ENCODE measurements at regions of chr17 and their contacts with region 1.

Region 1: GRCh38 chr17:75667021-75667790 is at the starts of genes RECQL5 and SAP30BP:
- DNase-seq: peak; percentile 99
- H3K4me3 Mint-ChIP-seq: no peak within 1 kb of the TSS
- H3K27ac Mint-ChIP-seq: no peak within 1 kb of the TSS
- H3K4me1 Mint-ChIP-seq: peaks cover 15% of the 10 kb centered on the region
- H3K27me3 Mint-ChIP-seq: no peaks in the 10 kb centered on the region
- CTCF ChIP-seq: no peak
- total RNA-seq, gene RECQL5: 36.3 and 47.9 TPM in 2 replicates
- total RNA-seq, gene SAP30BP: 108 and 123 TPM in 2 replicates

Region 2: DNA sequence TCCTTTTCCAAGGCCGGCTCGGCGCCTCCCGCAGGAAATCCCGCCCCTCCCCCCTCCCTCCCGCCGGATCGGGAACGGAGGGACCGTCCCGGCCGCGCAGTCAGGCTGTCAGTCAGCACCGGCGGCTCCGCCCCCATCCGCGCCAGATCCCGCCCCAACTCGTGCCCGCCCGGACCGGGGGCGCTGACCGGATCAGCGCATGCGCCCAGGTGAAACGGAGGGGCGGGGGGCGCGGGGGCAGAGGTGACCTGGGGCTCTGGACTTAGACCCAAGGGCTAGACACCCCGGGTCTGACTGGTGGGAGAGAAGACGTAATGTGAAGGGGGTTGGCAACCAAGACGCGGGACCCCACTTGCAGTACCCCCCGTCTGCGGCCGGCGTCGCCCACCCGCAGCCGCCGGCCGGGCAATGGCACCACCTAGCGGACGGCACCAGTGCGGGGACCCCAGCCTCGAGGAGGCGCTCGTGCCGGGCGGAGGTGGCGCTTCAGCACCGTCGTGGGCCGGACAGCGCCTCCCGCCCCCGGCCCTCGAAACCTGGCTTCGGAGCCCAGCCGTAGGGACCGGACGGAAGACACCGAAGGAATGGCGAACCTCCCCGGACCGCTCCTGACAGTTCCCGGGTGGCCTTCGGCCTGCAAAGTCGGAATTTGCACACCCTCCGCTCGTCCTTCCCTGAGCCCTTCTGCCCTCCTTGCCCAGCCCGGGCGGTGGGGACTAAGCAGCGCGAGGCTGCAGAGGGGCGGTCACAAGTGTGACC is 151.5 kb before region 1 on chr17 and contains the start of gene CASKIN2:
- CTCF ChIA-PET with region 1: no interaction called
- POLR2A ChIA-PET with region 1: interaction called, 11 read pairs
- intact Hi-C with region 1: no loop called
- DNase-seq: peak; percentile 91
- H3K4me3 Mint-ChIP-seq: peak within 1 kb of the TSS; percentile 81
- H3K27ac Mint-ChIP-seq: no peak within 1 kb of the TSS
- H3K4me1 Mint-ChIP-seq: peaks cover 11% of the 10 kb centered on the region
- H3K27me3 Mint-ChIP-seq: no peaks in the 10 kb centered on the region
- CTCF ChIP-seq: peak; percentile 96
- total RNA-seq, gene CASKIN2: 19.2 and 19.8 TPM in 2 replicates

Region 3: DNA sequence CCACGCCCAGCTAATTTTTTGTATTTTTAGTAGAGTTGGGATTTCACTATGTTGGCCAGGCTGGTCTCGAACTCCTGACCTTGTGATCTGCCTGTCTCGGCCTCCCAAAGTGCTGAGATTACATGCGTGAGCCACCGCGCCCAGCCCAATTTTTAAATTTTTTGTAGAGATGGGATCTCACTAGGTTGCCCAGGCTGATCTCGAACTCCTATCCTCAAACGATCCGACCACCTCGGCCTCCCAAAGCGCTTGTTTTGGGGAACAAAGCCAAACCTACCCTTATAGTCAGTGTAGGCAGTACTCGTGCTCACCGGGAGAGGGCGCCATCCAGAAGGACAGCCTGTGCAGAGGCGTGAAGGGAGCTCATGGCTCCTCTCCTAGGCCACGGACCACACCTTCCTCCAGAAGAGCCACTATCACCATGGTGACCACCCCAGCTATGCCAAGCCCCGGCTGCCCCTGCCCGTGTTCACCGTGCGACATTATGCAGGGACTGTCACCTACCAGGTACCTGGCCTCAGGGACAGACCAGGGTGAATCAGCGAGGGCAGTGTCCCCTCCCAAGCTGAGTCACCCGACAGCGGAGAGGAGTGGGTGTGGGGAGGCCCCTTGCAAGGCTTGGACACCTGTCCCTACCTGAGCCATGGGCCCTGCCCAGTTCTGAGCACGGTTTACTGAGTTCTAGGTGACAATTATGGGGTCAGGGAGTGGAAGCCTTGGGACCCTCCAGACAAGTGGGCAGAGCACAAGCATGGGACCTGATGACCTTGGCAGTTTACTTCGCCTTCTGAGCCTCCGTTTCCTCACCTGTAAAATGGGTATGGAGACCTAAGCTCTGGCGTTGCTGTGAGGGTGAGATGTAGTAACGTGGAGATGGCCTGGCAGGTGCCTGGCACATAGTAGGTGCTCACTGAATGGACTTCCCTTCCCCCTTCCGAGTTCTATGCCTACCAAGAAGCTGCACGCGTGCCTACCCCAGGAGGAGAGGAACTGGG is 65.9 kb before region 1 on chr17:
- CTCF ChIA-PET with region 1: no interaction called
- POLR2A ChIA-PET with region 1: no interaction called
- intact Hi-C with region 1: no loop called
- DNase-seq: peak; percentile 70
- H3K4me3 Mint-ChIP-seq: no peak overlapping the region
- H3K27ac Mint-ChIP-seq: no peak overlapping the region
- H3K4me1 Mint-ChIP-seq: peaks cover 18% of the 10 kb centered on the region
- H3K27me3 Mint-ChIP-seq: no peaks in the 10 kb centered on the region
- CTCF ChIP-seq: peak; percentile 79

Region 4: GRCh38 chr17:75652915-75653549 is 14.2 kb before region 1 on chr17:
- CTCF ChIA-PET with region 1: interaction called, 3 read pairs
- POLR2A ChIA-PET with region 1: interaction called, 25 read pairs
- intact Hi-C with region 1: no loop called
- DNase-seq: peak; percentile 38
- H3K4me3 Mint-ChIP-seq: no peak overlapping the region
- H3K27ac Mint-ChIP-seq: no peak overlapping the region
- H3K4me1 Mint-ChIP-seq: no peaks in the 10 kb centered on the region
- H3K27me3 Mint-ChIP-seq: no peaks in the 10 kb centered on the region
- CTCF ChIP-seq: peak; percentile 54

Region 5: GRCh38 chr17:75688209-75688825 is 21.1 kb after region 1 on chr17:
- CTCF ChIA-PET with region 1: interaction called, 5 read pairs
- POLR2A ChIA-PET with region 1: interaction called, 17 read pairs
- intact Hi-C with region 1: no loop called
- DNase-seq: peak; percentile 81
- H3K4me3 Mint-ChIP-seq: peak overlapping the region; percentile 0
- H3K27ac Mint-ChIP-seq: peak overlapping the region; percentile 90
- H3K4me1 Mint-ChIP-seq: peaks cover 75% of the 10 kb centered on the region
- H3K27me3 Mint-ChIP-seq: no peaks in the 10 kb centered on the region
- CTCF ChIP-seq: no peak

Region 6: DNA sequence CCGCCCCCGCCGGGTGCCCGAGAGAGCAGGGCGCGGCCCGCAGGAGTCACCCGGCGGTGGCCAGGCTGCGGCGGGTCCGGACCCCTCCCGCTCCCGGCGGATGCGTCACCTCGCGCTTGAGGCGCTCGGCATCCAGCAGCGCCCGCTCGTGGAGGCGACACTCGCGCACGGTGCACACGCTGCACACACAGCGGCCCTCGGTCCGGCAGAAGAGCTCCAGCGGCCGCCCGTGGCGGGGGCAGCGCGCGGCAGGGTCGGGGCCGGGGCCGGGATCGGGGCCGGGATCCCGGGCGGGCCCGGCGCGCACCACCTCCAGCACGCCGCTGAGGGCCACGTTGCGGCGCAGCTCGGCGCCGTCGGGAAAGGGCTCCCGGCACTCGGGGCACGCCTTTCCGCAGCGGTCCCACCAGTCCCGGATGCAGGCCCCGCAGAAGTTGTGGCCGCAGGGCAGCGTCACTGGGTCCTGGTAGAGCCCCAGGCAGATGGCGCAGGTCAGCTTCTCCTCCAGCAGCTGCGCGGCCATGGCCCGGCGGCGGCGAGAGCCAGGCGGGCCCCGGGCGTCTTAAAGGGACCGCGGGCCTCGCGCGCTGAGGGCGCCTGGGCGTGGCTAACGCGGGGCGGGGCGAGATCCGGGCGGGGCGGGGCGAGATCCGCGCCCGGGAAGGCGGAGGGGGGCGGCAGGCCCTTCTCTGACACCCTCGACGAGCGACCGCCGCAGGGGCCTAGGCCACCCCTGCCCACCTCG is 229.4 kb after region 1 on chr17 and contains the start of gene TRIM65:
- CTCF ChIA-PET with region 1: no interaction called
- POLR2A ChIA-PET with region 1: interaction called, 11 read pairs
- intact Hi-C with region 1: no loop called
- DNase-seq: peak; percentile 71
- H3K4me3 Mint-ChIP-seq: peak within 1 kb of the TSS; percentile 74
- H3K27ac Mint-ChIP-seq: peak within 1 kb of the TSS; percentile 70
- H3K4me1 Mint-ChIP-seq: peaks cover 19% of the 10 kb centered on the region
- H3K27me3 Mint-ChIP-seq: no peaks in the 10 kb centered on the region
- CTCF ChIP-seq: peak; percentile 14
- total RNA-seq, gene TRIM65: 15.9 and 17.4 TPM in 2 replicates